ENCODE measurements at regions of chr6 and their contacts with region 1.

Region 1: GRCh38 chr6:92979281-92979680 is 440.1 kb downstream of the EPHA7 start:
- DNase-seq: peak; percentile 10
- H3K4me3 ChIP-seq: no peak overlapping the region
- H3K27ac ChIP-seq: no peak overlapping the region
- H3K4me1 ChIP-seq: peaks cover 11% of the 10 kb centered on the region
- H3K27me3 ChIP-seq: no peaks in the 10 kb centered on the region
- CTCF ChIP-seq: no peak
- POLR2A ChIP-seq: no peak

Region 2: GRCh38 chr6:93036835-93037234 is 57.6 kb after region 1 on chr6:
- CTCF ChIA-PET with region 1: no interaction called
- POLR2A ChIA-PET with region 1: no interaction called
- dilution Hi-C with region 1: no loop called
- intact Hi-C with region 1: loop called (anchors 2 kb)
- DNase-seq: peak; percentile 29
- H3K4me3 ChIP-seq: no peak overlapping the region
- H3K27ac ChIP-seq: no peak overlapping the region
- H3K4me1 ChIP-seq: peaks cover 20% of the 10 kb centered on the region
- H3K27me3 ChIP-seq: no peaks in the 10 kb centered on the region
- CTCF ChIP-seq: peak; percentile 43 to 48
- POLR2A ChIP-seq: no peak

Region 3: DNA sequence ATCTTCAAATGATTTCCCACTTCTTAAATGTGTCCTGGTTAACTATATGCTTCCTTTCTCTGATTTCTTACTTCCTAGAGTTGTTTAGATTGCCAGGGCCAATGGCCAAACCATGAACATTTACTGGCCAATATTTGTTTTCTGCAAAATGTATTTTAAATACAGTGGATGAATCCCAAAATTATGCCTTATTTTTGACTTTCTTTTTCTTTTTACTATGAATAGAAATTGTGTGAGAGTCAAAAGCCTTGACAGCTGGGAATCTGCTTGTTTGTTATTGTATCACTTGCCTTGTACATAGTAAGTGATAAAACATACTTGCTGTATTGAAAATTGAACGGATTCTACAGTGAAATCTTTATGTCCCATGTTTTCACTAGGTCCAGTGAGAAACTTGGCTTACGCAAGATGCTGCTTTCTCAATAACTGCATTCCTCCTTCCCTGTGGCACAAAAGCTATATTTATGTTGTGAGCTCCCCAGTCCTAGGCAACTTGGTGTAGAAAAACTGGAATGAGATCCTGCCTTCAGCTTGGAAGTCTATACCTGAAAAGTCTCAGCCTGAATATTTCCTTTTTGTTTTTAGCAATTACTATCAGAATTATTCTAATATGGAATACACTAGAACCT is 144.8 kb after region 1 on chr6:
- CTCF ChIA-PET with region 1: no interaction called
- POLR2A ChIA-PET with region 1: no interaction called
- dilution Hi-C with region 1: no loop called
- intact Hi-C with region 1: no loop called
- DNase-seq: no peak
- H3K4me3 ChIP-seq: no peak overlapping the region
- H3K27ac ChIP-seq: no peak overlapping the region
- H3K4me1 ChIP-seq: no peaks in the 10 kb centered on the region
- H3K27me3 ChIP-seq: no peaks in the 10 kb centered on the region
- CTCF ChIP-seq: no peak
- POLR2A ChIP-seq: no peak

Measured in endothelial cell of umbilical vein (primary cell).